B cell (primary cell): ENCODE measurements at regions of chr9 and their contacts with region 1.

Region 1: DNA sequence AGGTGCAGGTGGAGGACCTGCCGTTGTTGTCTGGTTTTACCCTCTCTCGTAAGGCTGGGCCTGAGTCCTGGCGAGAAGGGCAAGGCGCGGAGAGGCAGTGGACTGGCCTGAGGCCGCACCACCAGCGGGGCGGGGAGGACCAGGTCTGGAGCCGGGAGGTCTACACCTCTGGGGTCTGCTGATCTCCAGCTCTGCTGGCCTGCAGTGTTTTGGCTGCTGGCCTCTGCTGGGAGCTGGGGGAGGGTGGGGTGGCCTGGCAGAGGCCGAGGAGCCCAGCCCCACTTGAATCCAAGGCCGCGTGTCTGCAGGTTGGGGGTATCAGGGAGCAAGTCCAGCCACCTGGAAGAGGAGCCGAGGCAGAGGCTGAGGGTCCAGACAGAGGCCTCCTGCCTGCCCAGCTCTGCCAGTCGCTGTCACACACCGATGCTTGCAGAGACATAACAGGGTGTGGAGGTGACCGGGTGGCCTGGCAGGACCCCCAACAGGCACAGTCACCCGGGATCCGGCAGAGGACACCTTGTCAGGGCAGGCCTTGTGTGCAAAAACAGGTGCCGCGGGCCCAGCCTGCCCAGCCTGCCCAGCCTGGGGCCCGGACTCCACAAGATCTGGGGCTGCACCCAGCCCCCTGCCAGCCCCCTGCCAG is 29.9 kb upstream of the NOTCH1 start:
- DNase-seq: no peak
- ATAC-seq: no peak
- H3K4me3 ChIP-seq: no peak overlapping the region
- H3K4me3 Mint-ChIP-seq: no peak overlapping the region
- H3K27ac ChIP-seq: no peak overlapping the region
- H3K27ac Mint-ChIP-seq: no peak overlapping the region
- H3K4me1 ChIP-seq: peaks cover 0 to 14% of the 10 kb centered on the region in 2 donors
- H3K4me1 Mint-ChIP-seq: peaks cover 7% of the 10 kb centered on the region
- H3K27me3 ChIP-seq: peaks cover 0 to 7% (median 2%) of the 10 kb centered on the region in 4 experiments
- H3K27me3 Mint-ChIP-seq: peaks cover 8% of the 10 kb centered on the region
- CTCF ChIP-seq: no peak

Region 2: GRCh38 chr9:135907431-135908092 is 668.2 kb before region 1 on chr9 and contains the start of gene CAMSAP1:
- CTCF ChIA-PET with region 1: no interaction called
- POLR2A ChIA-PET with region 1: no interaction called
- intact Hi-C with region 1: no loop called
- DNase-seq: peak; percentile 97
- ATAC-seq: peak; percentile 88
- H3K4me3 ChIP-seq: peak within 1 kb of the TSS; percentile 38 to 85 (median 84)
- H3K4me3 Mint-ChIP-seq: peak within 1 kb of the TSS; percentile 93
- H3K27ac ChIP-seq: peak within 1 kb of the TSS; percentile 44 to 74
- H3K27ac Mint-ChIP-seq: peak within 1 kb of the TSS; percentile 80
- H3K4me1 ChIP-seq: peaks cover 20 to 23% of the 10 kb centered on the region in 2 donors
- H3K4me1 Mint-ChIP-seq: peaks cover 43% of the 10 kb centered on the region
- H3K27me3 ChIP-seq: no peaks in the 10 kb centered on the region
- H3K27me3 Mint-ChIP-seq: no peaks in the 10 kb centered on the region
- CTCF ChIP-seq: no peak
- total RNA-seq, gene CAMSAP1: 31.0 and 31.6 TPM in 2 replicates

Region 3: GRCh38 chr9:136587944-136588661 is 12.4 kb after region 1 on chr9:
- CTCF ChIA-PET with region 1: no interaction called
- POLR2A ChIA-PET with region 1: no interaction called
- intact Hi-C with region 1: loop called (anchors 2 kb)
- DNase-seq: no peak
- ATAC-seq: no peak
- H3K4me3 ChIP-seq: peak overlapping the region in 2 of 5 experiments; percentile 6 to 24
- H3K4me3 Mint-ChIP-seq: peak overlapping the region; percentile 57
- H3K27ac ChIP-seq: no peak overlapping the region
- H3K27ac Mint-ChIP-seq: peak overlapping the region; percentile 56
- H3K4me1 ChIP-seq: peaks cover 24 to 26% of the 10 kb centered on the region in 2 donors
- H3K4me1 Mint-ChIP-seq: peaks cover 20% of the 10 kb centered on the region
- H3K27me3 ChIP-seq: peaks cover 0 to 47% (median 13%) of the 10 kb centered on the region in 4 experiments
- H3K27me3 Mint-ChIP-seq: peaks cover 9% of the 10 kb centered on the region
- CTCF ChIP-seq: no peak